ENCODE measurements at regions of chr5 and their contacts with region 1.

Region 1: DNA sequence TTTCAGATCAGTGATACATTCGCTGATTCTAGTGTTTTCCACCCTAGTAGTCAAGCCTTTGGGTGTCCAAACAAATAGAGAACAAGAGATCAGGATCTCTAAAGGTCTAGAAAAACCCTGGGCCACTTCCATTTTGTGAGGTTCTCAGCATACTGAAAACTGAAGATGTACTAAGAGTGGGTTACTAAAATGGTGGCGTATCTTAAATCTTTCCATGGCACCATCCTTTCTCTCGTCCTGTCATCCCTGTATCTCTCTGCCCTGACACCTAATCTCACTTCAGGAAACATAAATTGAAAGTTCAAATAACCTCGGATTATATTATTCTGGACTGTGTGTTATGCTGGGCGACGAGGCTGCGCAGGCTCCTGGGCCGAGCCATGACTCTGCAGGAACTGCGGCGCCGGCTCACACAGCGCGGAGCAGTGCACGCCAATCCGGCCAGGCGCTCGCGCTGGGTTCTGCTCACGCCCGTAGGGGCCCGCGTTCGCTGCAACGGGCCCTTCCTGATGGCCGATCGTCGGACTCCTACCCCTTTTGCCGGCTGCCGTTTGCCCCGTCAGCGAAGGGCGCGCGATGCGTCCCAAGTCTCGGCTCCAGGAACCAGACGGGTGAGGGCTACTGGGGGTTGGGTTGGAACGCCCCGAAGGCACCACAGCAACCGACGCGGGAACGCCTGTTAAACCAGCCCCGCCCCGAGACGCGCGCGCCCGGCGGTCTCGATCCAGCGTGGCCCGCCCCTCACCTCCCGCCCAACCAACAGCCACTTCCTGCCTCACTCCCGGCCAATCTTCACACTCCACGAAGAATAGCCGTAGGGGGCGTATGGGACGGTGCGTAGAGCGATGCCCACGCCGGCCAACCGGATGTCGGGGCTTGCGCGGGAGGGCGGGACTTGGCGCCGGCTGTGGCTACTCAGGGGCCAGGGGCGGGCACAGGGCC is 503 bp upstream of the CANX start:
- DNase-seq: peak; percentile 99
- H3K4me3 Mint-ChIP-seq: peak overlapping the region; percentile 100
- H3K27ac Mint-ChIP-seq: peak overlapping the region; percentile 100
- H3K4me1 Mint-ChIP-seq: peaks cover 27% of the 10 kb centered on the region
- H3K27me3 Mint-ChIP-seq: no peaks in the 10 kb centered on the region

Region 2: GRCh38 chr5:179550511-179551230 is 147.6 kb before region 1 on chr5 and contains the start of gene RUFY1:
- intact Hi-C with region 1: loop called (anchors 2 kb)
- DNase-seq: peak; percentile 83
- H3K4me3 Mint-ChIP-seq: peak within 1 kb of the TSS; percentile 99
- H3K27ac Mint-ChIP-seq: peak within 1 kb of the TSS; percentile 99
- H3K4me1 Mint-ChIP-seq: peaks cover 28% of the 10 kb centered on the region
- H3K27me3 Mint-ChIP-seq: peaks cover 2% of the 10 kb centered on the region
- total RNA-seq, gene RUFY1: 37.0 and 38.3 TPM in 2 replicates

Region 3: DNA sequence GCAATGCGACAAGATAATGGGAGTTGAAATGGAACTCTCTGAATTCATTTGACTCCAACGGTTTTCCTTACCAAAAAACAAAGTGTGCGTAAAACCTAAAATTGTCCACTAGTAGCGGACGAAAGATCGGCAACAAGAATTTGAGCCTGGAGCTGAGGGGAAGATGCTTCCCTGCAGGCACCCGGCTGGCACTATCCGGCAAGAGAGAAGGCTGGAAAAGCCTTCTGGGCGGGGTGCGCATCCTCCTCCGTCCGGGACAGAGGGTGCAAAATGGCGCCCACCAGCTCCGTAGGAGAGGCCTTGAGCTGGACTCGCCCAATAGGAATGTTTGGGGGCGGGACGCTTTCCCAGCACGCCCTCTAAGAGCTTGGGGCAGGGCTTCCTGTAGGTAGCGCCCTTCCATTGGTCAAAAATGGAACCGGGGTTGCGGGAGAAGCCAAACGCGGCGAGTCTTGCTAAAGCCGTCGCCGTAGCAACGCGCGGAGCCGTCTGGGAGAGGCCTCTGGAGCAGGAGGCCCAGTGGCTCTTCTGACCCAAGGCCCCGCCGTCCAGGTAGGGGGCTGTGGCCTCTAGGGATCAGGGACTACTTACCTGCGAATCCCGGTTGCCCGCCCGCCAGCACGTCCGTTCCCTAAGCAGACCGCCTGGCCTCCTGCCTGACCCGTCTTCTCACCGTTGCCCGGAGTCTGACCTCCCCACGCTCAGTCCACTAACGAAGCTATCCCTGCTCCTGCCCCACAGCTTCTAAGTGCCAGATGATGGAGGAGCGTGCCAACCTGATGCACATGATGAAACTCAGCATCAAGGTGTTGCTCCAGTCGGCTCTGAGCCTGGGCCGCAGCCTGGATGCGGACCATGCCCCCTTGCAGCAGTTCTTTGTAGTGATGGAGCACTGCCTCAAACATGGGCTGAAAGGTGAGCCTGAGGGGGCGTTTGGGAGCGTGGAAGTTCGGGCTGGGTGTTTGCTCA is 138.7 kb before region 1 on chr5:
- intact Hi-C with region 1: loop called (anchors 1 kb)
- DNase-seq: peak; percentile 93
- H3K4me3 Mint-ChIP-seq: peak overlapping the region; percentile 94
- H3K27ac Mint-ChIP-seq: peak overlapping the region; percentile 86
- H3K4me1 Mint-ChIP-seq: peaks cover 10% of the 10 kb centered on the region
- H3K27me3 Mint-ChIP-seq: no peaks in the 10 kb centered on the region

Region 4: GRCh38 chr5:179678223-179679013 is 19.8 kb before region 1 on chr5:
- intact Hi-C with region 1: loop called (anchors 1 kb)
- DNase-seq: peak; percentile 93
- H3K4me3 Mint-ChIP-seq: peak overlapping the region; percentile 99
- H3K27ac Mint-ChIP-seq: peak overlapping the region; percentile 98
- H3K4me1 Mint-ChIP-seq: peaks cover 21% of the 10 kb centered on the region
- H3K27me3 Mint-ChIP-seq: no peaks in the 10 kb centered on the region

Region 5: GRCh38 chr5:179716286-179716685 is 18.0 kb after region 1 on chr5:
- intact Hi-C with region 1: no loop called
- DNase-seq: no peak
- H3K4me3 Mint-ChIP-seq: no peak overlapping the region
- H3K27ac Mint-ChIP-seq: peak overlapping the region; percentile 85
- H3K4me1 Mint-ChIP-seq: peaks cover 15% of the 10 kb centered on the region
- H3K27me3 Mint-ChIP-seq: no peaks in the 10 kb centered on the region

Region 6: DNA sequence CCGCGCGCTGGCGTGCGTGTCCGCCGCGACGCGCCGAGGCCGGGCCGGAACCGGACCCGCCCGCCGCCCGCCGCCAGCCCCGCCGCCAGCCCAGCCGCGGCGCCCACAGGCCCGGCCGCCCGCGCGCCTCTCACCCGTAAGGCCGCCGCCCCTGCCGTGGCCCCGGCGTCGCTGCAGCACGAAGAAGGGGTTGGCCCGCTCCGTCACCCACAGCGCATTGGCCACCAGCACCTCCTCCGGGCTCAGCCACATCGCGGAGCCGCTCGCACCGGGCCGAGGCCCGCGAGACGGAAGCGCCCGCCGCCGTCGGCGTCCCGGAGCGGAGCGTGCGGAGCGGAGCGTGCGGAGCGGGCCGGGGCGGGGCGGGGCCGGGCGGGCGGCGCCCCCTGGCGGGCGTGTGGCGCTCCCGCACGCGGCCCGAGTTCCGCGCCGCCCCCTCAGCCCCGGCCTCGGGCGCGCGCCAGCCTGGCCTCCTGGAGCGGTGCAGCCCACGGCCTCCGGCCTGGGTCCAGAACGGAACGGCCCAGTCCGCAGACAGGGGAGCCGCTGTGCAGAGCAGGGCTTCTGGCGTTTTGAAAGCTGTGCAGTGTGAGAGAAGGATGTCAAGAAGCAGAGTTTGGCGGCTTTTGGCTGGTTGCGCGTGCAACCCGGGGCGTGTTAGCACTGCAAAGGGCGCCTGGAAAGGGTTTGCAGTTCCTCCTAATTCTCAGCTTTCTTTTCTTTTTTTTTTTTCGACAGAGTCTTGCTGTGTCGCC is 209.5 kb after region 1 on chr5 and contains the start of gene TBC1D9B:
- intact Hi-C with region 1: loop called (anchors 5 kb)
- DNase-seq: peak; percentile 69
- H3K4me3 Mint-ChIP-seq: peak within 1 kb of the TSS; percentile 95
- H3K27ac Mint-ChIP-seq: peak within 1 kb of the TSS; percentile 89
- H3K4me1 Mint-ChIP-seq: peaks cover 18% of the 10 kb centered on the region
- H3K27me3 Mint-ChIP-seq: peaks cover 2% of the 10 kb centered on the region
- total RNA-seq, gene TBC1D9B: 123 and 127 TPM in 2 replicates